T-cell (primary cell): ENCODE measurements at regions of chr11 and their contacts with region 1.

Region 1: DNA sequence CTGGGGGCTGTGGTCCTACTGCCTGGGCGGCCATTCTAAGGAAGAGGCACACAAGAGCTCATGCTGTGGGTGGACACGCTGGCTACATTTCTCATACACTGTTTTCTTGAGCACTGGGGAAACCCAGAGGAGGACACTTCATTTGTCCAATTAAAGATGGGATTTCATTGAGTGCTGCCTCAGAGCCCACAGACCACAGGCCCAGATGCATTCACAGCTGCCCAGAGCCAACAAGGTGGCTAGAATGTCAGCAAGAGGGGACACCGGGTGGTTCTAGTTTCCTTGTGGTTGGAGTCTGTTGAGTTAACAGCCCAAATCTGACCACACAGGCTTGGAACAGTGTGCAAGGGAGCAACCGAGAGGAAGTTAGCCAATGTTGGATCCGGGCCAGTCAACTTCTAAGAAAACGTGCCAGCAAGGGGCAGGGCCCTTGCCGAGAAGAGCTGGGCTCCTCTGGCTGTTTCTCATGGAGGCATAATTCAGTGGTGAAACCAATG is 35.0 kb upstream of the SORL1 start:
- DNase-seq: peak in 33 of 35 experiments; percentile 22 to 73 (median 52)
- ATAC-seq: peak; percentile 57 to 69 (median 62)
- H3K4me3 ChIP-seq: no peak overlapping the region
- H3K4me3 Mint-ChIP-seq: peak overlapping the region in 2 of 3 donors; percentile 24 to 56
- H3K27ac ChIP-seq: peak overlapping the region; percentile 71
- H3K27ac Mint-ChIP-seq: peak overlapping the region; percentile 88 to 90
- H3K4me1 ChIP-seq: peaks cover 15 to 51% of the 10 kb centered on the region in 2 experiments
- H3K4me1 Mint-ChIP-seq: peaks cover 62 to 75% (median 75%) of the 10 kb centered on the region in 3 donors
- H3K27me3 ChIP-seq: no peaks in the 10 kb centered on the region
- H3K27me3 Mint-ChIP-seq: no peaks in the 10 kb centered on the region

Region 2: DNA sequence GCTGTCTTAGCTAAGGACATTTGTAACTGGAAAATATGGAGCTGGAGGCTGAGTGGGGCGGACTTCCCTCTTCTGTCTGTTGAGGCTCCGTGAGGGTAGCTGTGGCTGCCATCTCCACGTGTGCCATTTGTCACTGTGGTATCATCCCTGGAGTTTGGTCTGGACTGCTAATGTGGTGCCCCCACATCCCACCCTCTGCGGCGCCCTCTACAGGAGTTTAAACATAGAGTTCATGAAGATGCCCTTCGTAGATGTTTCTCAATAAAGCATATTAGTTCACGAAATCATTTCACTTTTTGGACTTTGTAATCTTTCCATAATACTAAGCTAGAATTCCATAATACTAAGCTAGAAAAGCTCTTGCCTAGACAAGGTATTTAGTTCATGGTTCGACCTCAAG is 263.6 kb before region 1 on chr11:
- CTCF ChIA-PET with region 1: no interaction called
- POLR2A ChIA-PET with region 1: no interaction called
- DNase-seq: no peak
- ATAC-seq: no peak
- H3K4me3 ChIP-seq: no peak overlapping the region
- H3K4me3 Mint-ChIP-seq: no peak overlapping the region
- H3K27ac ChIP-seq: no peak overlapping the region
- H3K27ac Mint-ChIP-seq: no peak overlapping the region
- H3K4me1 ChIP-seq: no peaks in the 10 kb centered on the region
- H3K4me1 Mint-ChIP-seq: no peaks in the 10 kb centered on the region
- H3K27me3 ChIP-seq: peaks cover 0 to 5% of the 10 kb centered on the region in 2 experiments
- H3K27me3 Mint-ChIP-seq: peaks cover under 1 to 5% of the 10 kb centered on the region in 2 donors

Region 3: DNA sequence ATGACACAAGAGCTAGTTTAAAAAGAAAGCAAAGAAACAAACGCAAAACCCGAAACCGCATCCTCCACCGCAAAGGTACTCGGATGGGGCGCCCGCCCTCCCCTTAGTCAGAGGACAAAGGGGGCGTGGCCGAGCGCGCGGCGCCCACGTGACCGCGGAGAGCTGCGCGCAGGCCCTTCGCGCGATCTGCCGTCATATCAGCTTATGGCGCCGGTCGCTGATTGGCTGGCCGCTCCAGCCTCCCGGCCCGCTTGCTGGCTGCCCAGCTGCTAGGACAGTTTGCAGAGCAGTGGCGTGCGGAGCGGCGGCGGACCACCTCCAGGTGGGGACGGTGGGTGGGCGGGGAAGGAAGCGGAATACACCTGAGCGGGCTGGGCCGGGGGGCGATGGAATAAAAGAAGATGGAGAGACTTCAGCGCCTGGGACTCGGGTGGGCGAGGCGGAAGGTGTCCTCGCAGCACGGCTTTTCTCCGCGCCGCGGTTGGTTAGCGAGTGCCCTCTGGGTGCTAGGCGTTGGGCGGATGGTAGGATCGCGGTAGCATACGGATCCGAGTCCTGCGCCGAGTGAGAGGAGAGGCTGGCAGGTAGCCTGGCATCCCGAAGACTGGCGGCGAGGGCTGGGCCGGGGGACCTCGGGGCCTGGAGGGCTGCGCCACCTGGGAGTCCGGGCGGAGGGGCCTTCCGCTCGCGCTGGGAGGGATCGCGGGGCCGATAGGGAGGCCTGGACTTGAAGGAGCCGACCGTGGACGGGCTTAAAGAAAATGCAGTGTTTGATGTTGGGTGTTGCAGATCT is 124.4 kb before region 1 on chr11 and contains the start of gene SC5D:
- CTCF ChIA-PET with region 1: no interaction called
- POLR2A ChIA-PET with region 1: interaction called in 1 of 2 experiments, 11 read pairs
- DNase-seq: peak; percentile 88 to 98 (median 94)
- ATAC-seq: peak; percentile 86 to 96 (median 94)
- H3K4me3 ChIP-seq: peak within 1 kb of the TSS; percentile 84 to 92
- H3K4me3 Mint-ChIP-seq: peak within 1 kb of the TSS; percentile 93 to 95 (median 93)
- H3K27ac ChIP-seq: peak within 1 kb of the TSS; percentile 98
- H3K27ac Mint-ChIP-seq: peak within 1 kb of the TSS; percentile 99
- H3K4me1 ChIP-seq: peaks cover 8 to 16% of the 10 kb centered on the region in 2 experiments
- H3K4me1 Mint-ChIP-seq: peaks cover 53 to 56% (median 53%) of the 10 kb centered on the region in 3 donors
- H3K27me3 ChIP-seq: no peaks in the 10 kb centered on the region
- H3K27me3 Mint-ChIP-seq: peaks cover 0 to 2% of the 10 kb centered on the region in 2 donors
- total RNA-seq, gene SC5D: 19.1 to 51.3 (median 25.6) TPM